Panc1 (cell line): ENCODE measurements at regions of chr14 and their contacts with region 1.

Region 1: DNA sequence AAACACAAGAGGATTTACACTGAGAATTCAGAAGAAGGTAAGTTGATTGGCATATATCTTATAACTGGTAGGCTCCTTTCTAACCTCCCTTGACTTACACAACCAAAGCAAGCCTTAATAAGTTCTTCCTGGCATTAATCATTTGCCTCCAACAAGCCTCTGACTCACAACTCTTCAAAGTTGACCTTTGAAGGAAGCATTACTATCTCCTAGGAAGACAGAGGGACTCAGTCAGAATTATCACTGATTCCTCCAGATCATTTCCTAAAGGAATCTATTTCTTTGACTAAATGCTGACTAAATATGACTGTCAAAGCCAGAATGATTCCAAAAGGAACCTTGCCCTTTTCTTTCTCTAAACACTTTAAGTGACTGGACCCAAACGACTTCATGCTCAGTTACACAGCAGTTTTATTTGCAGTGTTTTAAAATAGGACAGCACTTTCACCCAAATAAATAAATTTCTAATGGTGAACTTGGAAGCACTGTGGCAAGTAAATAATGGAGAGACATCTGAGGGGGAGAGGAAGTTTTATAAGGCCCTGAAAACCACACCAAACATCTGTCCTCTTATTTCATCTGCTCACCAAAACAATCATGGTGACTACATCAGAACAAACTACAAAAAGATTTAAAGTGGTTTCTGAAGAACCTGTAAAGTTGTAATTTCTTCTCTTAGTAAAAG is 128.2 kb downstream of the KLHL28 start:
- DNase-seq: no peak
- ATAC-seq: no peak
- H3K4me3 ChIP-seq: no peak overlapping the region
- H3K27ac ChIP-seq: no peak overlapping the region
- H3K4me1 ChIP-seq: no peaks in the 10 kb centered on the region
- H3K27me3 ChIP-seq: no peaks in the 10 kb centered on the region
- CTCF ChIP-seq: no peak

Region 2: GRCh38 chr14:44701563-44702263 is 131.8 kb before region 1 on chr14:
- CTCF ChIA-PET with region 1: no interaction called
- POLR2A ChIA-PET with region 1: no interaction called
- in situ Hi-C with region 1: no loop called
- intact Hi-C with region 1: no loop called
- DNase-seq: no peak
- ATAC-seq: no peak
- H3K4me3 ChIP-seq: no peak overlapping the region
- H3K27ac ChIP-seq: no peak overlapping the region
- H3K4me1 ChIP-seq: no peaks in the 10 kb centered on the region
- H3K27me3 ChIP-seq: no peaks in the 10 kb centered on the region
- CTCF ChIP-seq: no peak

Region 3: GRCh38 chr14:44820230-44820964 is 13.1 kb before region 1 on chr14:
- CTCF ChIA-PET with region 1: no interaction called
- POLR2A ChIA-PET with region 1: interaction called, 12 read pairs
- in situ Hi-C with region 1: no loop called
- intact Hi-C with region 1: no loop called
- DNase-seq: no peak
- ATAC-seq: no peak
- H3K4me3 ChIP-seq: no peak overlapping the region
- H3K27ac ChIP-seq: no peak overlapping the region
- H3K4me1 ChIP-seq: no peaks in the 10 kb centered on the region
- H3K27me3 ChIP-seq: no peaks in the 10 kb centered on the region
- CTCF ChIP-seq: no peak